Upper lobe of right lung (tissue), 1 donor: ENCODE measurements at regions of chr17 and their contacts with region 1.

Region 1: DNA sequence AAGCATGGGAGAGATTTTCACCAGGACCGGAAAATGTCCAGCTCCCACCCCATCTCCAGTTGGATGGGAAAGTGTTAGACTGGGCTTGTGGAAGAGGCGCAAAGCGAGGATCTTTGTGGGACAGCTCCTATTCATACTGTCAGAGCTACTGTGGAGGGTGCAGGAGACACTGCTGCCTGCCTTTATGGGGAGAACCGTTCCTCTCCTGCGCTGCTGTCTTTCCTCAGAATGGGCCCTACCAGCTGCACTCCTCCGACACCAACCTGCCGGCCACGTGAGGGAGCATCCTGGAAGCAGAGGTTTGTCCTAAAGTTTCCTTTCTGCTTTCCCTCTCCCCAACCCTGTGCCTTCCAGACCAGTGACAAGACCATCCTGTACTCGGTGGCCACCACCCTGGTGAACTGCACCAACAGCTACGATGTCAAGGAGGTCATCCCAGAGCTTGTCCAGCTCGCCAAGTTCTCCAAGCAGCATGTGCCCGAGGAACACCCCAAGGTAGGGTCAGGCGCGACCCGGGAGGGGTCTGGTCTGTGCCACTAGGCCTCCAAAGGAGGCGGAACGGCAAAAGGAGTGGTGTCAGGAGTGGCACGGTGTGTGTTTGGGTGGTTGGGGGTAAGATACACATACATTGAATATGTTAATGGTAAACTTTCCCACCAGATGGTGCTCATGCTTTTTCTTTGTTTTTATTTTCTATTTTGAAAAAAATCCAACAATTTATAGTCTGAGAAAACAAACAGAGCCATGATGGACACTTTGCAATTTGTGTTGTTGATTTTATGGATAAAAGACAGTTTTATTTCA is 23.0 kb downstream of the SLC35G3 start:
- DNase-seq: no peak
- ATAC-seq: peak; percentile 37
- H3K4me3 ChIP-seq: no peak overlapping the region
- H3K27ac ChIP-seq: no peak overlapping the region
- H3K4me1 ChIP-seq: peaks cover 8% of the 10 kb centered on the region
- H3K27me3 ChIP-seq: no peaks in the 10 kb centered on the region
- CTCF ChIP-seq: peak; percentile 43

Region 2: DNA sequence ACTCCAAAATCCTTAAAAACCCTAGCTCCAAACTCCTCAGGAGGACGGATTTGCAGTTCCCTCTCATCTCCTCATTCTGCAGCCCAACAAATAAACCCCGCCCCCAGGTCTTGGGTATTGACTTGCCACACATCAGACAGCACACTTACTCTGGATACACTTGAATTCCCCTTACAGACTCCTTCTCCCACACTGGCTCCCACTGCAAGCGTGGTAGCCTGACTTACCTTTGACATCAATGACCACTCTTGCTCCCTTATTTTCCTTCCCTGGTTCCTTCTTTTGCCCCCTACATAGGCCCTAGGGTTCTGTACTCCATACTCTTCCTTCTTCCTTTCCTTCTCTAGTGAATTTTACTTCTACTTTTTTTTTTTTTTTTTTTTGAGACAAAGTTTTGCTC is 115.2 kb before region 1 on chr17:
- intact Hi-C with region 1: no loop called
- DNase-seq: no peak
- ATAC-seq: peak; percentile 58
- H3K4me3 ChIP-seq: no peak overlapping the region
- H3K27ac ChIP-seq: no peak overlapping the region
- H3K4me1 ChIP-seq: peaks cover 18% of the 10 kb centered on the region
- H3K27me3 ChIP-seq: no peaks in the 10 kb centered on the region
- CTCF ChIP-seq: no peak

Region 3: GRCh38 chr17:35227546-35227945 is 56.4 kb after region 1 on chr17:
- intact Hi-C with region 1: no loop called
- DNase-seq: no peak
- ATAC-seq: no peak
- H3K4me3 ChIP-seq: no peak overlapping the region
- H3K27ac ChIP-seq: no peak overlapping the region
- H3K4me1 ChIP-seq: no peaks in the 10 kb centered on the region
- H3K27me3 ChIP-seq: no peaks in the 10 kb centered on the region
- CTCF ChIP-seq: no peak

Region 4: GRCh38 chr17:35537601-35538141 is 366.5 kb after region 1 on chr17 and contains the start of gene SLFN12L:
- intact Hi-C with region 1: loop called (anchors 10 kb)
- DNase-seq: no peak
- ATAC-seq: peak; percentile 24
- H3K4me3 ChIP-seq: peak within 1 kb of the TSS; percentile 38
- H3K27ac ChIP-seq: peak within 1 kb of the TSS; percentile 72
- H3K4me1 ChIP-seq: peaks cover 49% of the 10 kb centered on the region
- H3K27me3 ChIP-seq: no peaks in the 10 kb centered on the region
- CTCF ChIP-seq: no peak
- total RNA-seq, gene SLFN12L: 5.1 TPM

Region 5: GRCh38 chr17:35747540-35748017 is 576.4 kb after region 1 on chr17:
- intact Hi-C with region 1: loop called (anchors 5 kb)
- DNase-seq: peak; percentile 80
- ATAC-seq: peak; percentile 87
- H3K4me3 ChIP-seq: no peak overlapping the region
- H3K27ac ChIP-seq: no peak overlapping the region
- H3K4me1 ChIP-seq: peaks cover 7% of the 10 kb centered on the region
- H3K27me3 ChIP-seq: peaks cover 49% of the 10 kb centered on the region
- CTCF ChIP-seq: peak; percentile 87